Dendritic cell treated with granulocyte-macrophage colony-stimulating factor and Interleukin-4, amounts not matched to agents 40 ng/mL and 50 ng/mL, for 4 days (primary cell): ENCODE measurements at regions of chr17 and their contacts with region 1.

Region 1: GRCh38 chr17:19284005-19284959 is 47.1 kb downstream of the EPN2 start:
- H3K4me3 Mint-ChIP-seq: peak overlapping the region; percentile 9
- H3K27ac Mint-ChIP-seq: peak overlapping the region; percentile 84
- H3K4me1 Mint-ChIP-seq: peaks cover 71% of the 10 kb centered on the region
- H3K27me3 Mint-ChIP-seq: peaks cover 73% of the 10 kb centered on the region

Region 2: DNA sequence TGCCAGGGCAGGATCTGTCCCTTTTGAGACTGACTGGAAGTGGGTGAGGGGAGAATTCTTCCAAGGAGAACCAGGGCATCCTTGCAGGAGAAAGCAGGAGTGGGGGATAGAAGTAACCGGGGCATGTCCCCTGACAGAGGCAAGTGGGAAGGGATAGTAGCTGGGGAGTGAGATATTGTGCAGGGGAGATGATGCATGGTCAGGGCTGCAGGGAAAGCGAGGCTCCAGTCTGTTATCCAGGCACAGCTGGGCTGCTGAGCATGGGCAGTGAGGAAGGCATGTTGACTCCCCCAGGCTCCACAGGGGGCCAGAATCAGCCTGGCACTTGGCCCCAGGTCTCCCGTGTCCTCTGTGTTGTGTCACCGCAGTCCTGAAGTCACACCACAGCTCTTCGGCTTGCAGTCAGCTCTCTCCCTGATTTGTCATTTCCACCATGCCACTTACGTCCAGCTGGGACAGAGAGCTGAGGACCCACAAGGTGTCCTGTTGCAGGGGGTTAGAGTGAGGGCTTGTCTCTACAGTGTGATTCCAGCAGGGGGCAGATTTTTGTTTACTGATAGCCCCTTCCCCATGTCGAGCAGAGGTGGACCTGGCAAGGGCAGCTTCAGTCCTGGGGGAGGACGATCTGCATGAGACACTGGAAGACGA is 37.3 kb after region 1 on chr17:
- intact Hi-C with region 1: loop called (anchors 5 kb)
- H3K4me3 Mint-ChIP-seq: no peak overlapping the region
- H3K27ac Mint-ChIP-seq: no peak overlapping the region
- H3K4me1 Mint-ChIP-seq: peaks cover 7% of the 10 kb centered on the region
- H3K27me3 Mint-ChIP-seq: peaks cover 85% of the 10 kb centered on the region